ENCODE measurements at regions of chr18 and their contacts with region 1.

Region 1: DNA sequence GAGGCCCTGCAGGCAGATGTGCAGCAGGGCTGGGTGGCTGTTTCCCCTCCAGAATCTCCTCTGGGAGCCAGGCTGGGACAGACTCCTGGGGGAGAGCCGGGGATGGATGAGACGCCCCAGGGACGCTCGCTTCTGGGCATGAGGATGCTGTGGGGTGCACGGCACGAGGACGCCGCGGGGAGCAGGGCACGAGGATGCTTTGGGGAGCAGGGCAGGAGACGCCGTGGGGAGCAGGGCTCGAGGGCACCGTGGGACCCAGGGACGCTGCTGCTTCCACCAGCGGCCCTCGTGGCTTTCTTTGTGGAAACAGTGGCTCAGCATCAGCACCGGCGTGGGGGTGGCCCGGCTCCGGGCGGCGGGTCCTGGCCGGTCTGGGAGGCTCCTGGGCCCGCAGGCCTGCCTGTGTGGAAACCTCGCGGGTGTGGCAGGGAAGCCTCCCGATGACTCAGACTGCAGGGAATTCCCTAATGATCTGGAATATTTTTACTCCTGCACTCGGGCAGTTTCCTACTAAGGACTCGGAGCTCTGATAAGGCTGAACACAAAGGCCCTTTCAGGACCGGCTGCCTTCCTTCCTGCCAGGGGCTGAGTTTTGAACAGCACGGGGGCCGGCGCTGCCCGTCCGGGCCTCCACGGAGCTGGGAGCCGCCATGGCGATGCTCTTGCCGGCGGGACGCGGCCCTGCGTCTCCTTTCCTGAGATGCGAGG is 62.6 kb downstream of the NFATC1 start:
- DNase-seq: peak; percentile 83
- ATAC-seq: peak; percentile 88

Region 2: GRCh38 chr18:79400091-79400590 is 58.1 kb before region 1 on chr18:
- intact Hi-C with region 1: loop called (anchors 10 kb)
- DNase-seq: peak; percentile 89
- ATAC-seq: peak; percentile 39

Measured in left ventricle myocardium superior (tissue), 1 donor.